B cell (primary cell): ENCODE measurements at regions of chrX and their contacts with region 1.

Region 1: GRCh38 chrX:155148724-155149537 is 67.3 kb upstream of the VBP1 start:
- DNase-seq: peak; percentile 7
- ATAC-seq: no peak
- H3K4me3 ChIP-seq: no peak overlapping the region
- H3K4me3 Mint-ChIP-seq: no peak overlapping the region
- H3K27ac ChIP-seq: no peak overlapping the region
- H3K27ac Mint-ChIP-seq: no peak overlapping the region
- H3K4me1 ChIP-seq: no peaks in the 10 kb centered on the region
- H3K4me1 Mint-ChIP-seq: no peaks in the 10 kb centered on the region
- H3K27me3 ChIP-seq: no peaks in the 10 kb centered on the region
- H3K27me3 Mint-ChIP-seq: peaks cover 5% of the 10 kb centered on the region
- CTCF ChIP-seq: peak; percentile 21

Region 2: DNA sequence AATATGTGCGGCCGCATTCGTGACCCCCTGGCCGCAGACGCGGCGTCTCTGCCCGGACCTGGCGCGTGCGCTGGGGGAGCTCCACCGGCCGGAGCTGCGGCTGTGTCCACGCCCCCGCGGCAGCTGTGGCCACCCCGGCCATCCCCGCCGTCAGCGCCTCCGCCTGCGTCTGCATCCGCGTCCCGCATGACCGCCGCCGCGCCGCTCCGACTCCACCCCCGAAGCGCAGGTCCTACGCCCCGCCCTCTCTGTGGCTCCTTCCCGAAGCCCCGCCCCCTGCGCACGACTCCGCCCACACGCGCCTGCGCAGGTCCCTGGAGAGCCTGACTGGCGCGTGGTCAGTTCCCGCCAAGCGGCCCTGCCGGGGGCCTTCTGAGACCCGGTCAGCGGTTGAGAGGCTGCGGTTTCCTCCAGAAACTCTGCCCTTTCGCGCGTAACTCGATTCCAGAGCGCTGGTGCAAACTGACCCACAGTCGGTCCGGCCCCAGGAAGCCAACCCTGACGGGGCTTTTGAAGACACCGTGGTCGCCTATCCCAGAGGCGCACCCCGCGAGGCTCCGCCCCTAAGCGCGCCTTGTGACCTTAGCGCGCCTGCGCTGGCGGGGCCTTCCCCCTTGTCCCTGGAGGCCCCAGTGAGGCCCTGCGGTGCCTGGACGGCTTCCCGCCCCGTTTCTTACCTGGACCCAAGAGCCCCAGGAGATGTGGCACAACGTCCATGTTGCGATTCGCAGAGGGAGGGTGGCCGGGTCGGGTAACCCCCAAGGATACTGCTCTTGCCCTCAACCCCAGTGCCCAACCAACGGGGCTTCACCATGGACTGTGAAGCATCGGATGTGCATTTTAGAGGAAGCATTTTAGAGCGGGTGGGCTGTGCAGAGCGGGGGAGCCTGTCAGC is 670.0 kb before region 1 on chrX and contains the start of gene LAGE3:
- CTCF ChIA-PET with region 1: no interaction called
- POLR2A ChIA-PET with region 1: no interaction called
- intact Hi-C with region 1: no loop called
- DNase-seq: peak; percentile 94
- ATAC-seq: peak; percentile 88
- H3K4me3 ChIP-seq: peak within 1 kb of the TSS in 4 of 5 experiments; percentile 51 to 59 (median 54)
- H3K4me3 Mint-ChIP-seq: peak within 1 kb of the TSS; percentile 88
- H3K27ac ChIP-seq: peak within 1 kb of the TSS; percentile 75 to 84
- H3K27ac Mint-ChIP-seq: peak within 1 kb of the TSS; percentile 94
- H3K4me1 ChIP-seq: peaks cover 5 to 16% of the 10 kb centered on the region in 2 donors
- H3K4me1 Mint-ChIP-seq: peaks cover 19% of the 10 kb centered on the region
- H3K27me3 ChIP-seq: no peaks in the 10 kb centered on the region
- H3K27me3 Mint-ChIP-seq: no peaks in the 10 kb centered on the region
- CTCF ChIP-seq: no peak
- total RNA-seq, gene LAGE3: 17.0 and 19.3 TPM in 2 replicates

Region 3: DNA sequence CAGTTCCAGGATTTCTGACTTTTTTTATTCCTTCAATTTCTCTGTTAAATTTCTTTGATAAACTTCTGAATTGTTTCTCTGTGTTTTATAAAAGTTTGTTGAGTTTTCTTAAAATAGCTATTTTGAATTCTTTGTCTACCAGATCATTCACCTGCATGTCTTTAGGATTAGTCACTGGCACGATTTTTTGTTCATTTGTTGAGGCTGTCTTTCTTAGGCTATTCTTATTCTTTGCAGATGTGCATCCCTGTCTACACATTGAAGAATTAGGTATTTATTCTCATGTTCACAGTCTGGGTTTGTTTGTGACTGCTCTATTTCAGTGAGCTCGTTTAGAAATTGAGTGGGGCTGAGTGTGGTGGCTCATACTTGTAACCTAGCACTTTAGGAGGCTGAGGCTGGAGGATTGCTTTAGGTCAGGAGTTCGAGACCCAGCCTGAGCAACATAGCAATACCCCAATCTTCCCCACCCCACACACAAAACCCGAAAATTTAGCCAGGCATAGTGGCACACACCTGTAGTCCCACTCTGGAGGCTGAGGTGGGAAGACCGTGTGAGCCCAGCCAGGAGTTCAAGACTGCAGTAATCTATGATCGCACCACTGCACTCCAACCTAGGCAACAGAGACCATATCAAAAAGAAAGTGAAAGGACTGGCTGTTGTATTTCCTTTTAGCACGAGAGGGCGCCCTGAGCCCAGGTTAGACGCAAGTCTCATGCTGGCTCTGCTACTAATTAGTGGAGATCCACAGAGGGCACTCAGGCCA is 168.4 kb before region 1 on chrX:
- CTCF ChIA-PET with region 1: interaction called, 3 read pairs
- POLR2A ChIA-PET with region 1: no interaction called
- intact Hi-C with region 1: loop called (anchors 2 kb)
- DNase-seq: peak; percentile 82
- ATAC-seq: peak; percentile 93
- H3K4me3 ChIP-seq: peak overlapping the region in 4 of 5 experiments; percentile 6 to 40 (median 22)
- H3K4me3 Mint-ChIP-seq: peak overlapping the region; percentile 79
- H3K27ac ChIP-seq: no peak overlapping the region
- H3K27ac Mint-ChIP-seq: no peak overlapping the region
- H3K4me1 ChIP-seq: peaks cover 0 to 9% of the 10 kb centered on the region in 2 donors
- H3K4me1 Mint-ChIP-seq: peaks cover 2% of the 10 kb centered on the region
- H3K27me3 ChIP-seq: no peaks in the 10 kb centered on the region
- H3K27me3 Mint-ChIP-seq: peaks cover 8% of the 10 kb centered on the region
- CTCF ChIP-seq: peak; percentile 72